ENCODE measurements at regions of chr11 and their contacts with region 1.

Region 1: GRCh38 chr11:3709977-3710376 is 38.8 kb upstream of the CHRNA10 start:
- DNase-seq: no peak
- H3K4me3 ChIP-seq: no peak overlapping the region
- H3K27ac ChIP-seq: no peak overlapping the region
- H3K4me1 ChIP-seq: no peaks in the 10 kb centered on the region
- CTCF ChIP-seq: no peak

Region 2: GRCh38 chr11:3753110-3753509 is 43.1 kb after region 1 on chr11:
- CTCF ChIA-PET with region 1: no interaction called
- POLR2A ChIA-PET with region 1: interaction called, 3 read pairs
- intact Hi-C with region 1: loop called (anchors 5 kb)
- DNase-seq: no peak
- H3K4me3 ChIP-seq: no peak overlapping the region
- H3K27ac ChIP-seq: no peak overlapping the region
- H3K4me1 ChIP-seq: no peaks in the 10 kb centered on the region
- CTCF ChIP-seq: no peak